PC-3 (cell line): ENCODE measurements at regions of chr6 and their contacts with region 1.

Region 1: DNA sequence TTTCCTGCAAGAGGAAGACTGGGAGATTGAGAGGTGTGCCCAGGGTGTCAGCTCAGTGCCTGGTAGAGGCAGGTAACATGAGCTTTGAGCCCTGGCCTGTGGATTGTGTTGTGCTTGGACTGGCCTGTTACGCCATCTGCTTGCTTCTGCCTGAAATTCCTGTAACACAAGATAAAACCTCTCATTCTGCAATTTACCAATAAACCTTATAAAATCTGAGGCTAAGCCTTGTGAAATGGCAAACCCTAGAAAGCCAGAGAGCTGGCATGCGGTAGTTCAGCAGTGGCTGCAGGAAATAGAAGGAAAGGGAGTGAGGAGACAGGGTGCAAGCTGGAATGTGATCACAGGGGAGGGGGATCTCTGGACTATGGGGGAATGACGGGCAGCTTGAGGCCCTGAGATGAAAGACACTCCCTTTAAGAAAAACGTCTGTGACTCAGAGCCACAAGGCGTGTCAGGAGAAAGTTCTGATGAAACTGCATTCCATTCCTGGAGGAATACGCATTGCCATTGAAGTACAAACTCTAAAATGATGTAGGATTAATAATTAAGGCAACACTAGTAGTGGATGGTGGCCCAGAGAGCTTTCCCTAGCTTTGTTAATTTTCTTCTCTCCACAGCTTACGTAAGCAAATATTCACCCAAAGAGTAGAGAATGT is 26.3 kb upstream of the TFAP2A start:
- DNase-seq: peak; percentile 98
- ATAC-seq: peak; percentile 89
- H3K4me3 ChIP-seq: peak overlapping the region; percentile 24
- H3K27ac ChIP-seq: peak overlapping the region; percentile 87
- H3K4me1 ChIP-seq: peaks cover 20% of the 10 kb centered on the region
- H3K27me3 ChIP-seq: no peaks in the 10 kb centered on the region
- CTCF ChIP-seq: peak; percentile 22; the same call in 1 of the 2 replicates

Region 2: GRCh38 chr6:10451828-10452509 is 10.8 kb after region 1 on chr6:
- CTCF ChIA-PET with region 1: no interaction called
- POLR2A ChIA-PET with region 1: interaction called, 13 read pairs
- intact Hi-C with region 1: loop called (anchors 1 kb)
- DNase-seq: peak; percentile 98
- ATAC-seq: peak; percentile 98
- H3K4me3 ChIP-seq: no peak overlapping the region
- H3K27ac ChIP-seq: peak overlapping the region; percentile 83
- H3K4me1 ChIP-seq: peaks cover 35% of the 10 kb centered on the region
- H3K27me3 ChIP-seq: no peaks in the 10 kb centered on the region
- CTCF ChIP-seq: no peak

Region 3: DNA sequence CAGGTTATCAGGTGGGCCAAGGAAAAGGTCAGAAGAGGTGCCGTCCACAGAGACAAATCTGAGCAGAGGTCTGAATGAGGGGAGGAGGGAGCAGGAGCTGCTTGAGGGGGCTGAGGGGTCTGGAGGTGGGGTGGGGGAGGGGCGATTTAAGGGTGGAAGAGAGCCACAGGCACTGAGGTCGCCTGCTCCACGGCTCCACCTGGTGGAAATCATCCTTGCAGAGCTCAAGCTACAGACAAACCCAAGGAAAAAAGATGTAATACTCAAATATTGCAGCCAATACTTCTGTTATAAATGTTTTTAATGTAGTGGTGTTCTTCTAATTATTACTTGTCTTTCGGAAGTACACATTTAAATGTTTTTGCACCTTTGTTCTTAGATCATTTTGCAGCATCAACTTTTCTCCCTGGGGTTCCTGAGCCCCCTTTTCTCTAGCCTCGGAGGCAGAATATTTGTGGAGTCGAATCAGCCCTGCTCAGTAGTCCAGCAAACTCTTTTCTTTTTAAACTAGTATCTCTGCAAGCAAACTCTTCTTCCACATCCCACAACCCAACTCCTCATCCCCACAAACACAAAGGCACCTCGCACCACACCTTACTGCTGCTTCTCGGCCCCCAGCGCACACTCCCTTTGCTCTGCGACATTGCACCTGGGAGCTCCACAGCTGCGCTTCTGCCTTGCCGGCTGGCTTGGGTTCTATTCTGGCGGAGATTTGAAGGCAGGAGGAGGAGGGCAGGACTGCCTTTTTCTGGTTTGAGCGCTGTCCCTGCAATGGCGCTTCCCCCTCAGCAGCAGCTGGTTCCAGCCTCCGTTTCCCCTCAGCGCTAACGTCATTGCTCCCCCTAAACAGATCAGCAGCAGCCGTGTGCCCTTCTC is 24.7 kb after region 1 on chr6:
- CTCF ChIA-PET with region 1: interaction called, 7 read pairs
- POLR2A ChIA-PET with region 1: no interaction called
- intact Hi-C with region 1: loop called (anchors 1 kb)
- DNase-seq: peak; percentile 75
- ATAC-seq: peak; percentile 76
- H3K4me3 ChIP-seq: no peak overlapping the region
- H3K27ac ChIP-seq: no peak overlapping the region
- H3K4me1 ChIP-seq: peaks cover 11% of the 10 kb centered on the region; the same call in 1 of the 2 replicates
- H3K27me3 ChIP-seq: no peaks in the 10 kb centered on the region
- CTCF ChIP-seq: peak; percentile 71

Region 4: GRCh38 chr6:10595731-10596664 is 154.9 kb after region 1 on chr6:
- CTCF ChIA-PET with region 1: no interaction called
- POLR2A ChIA-PET with region 1: interaction called, 10 read pairs
- intact Hi-C with region 1: no loop called
- DNase-seq: peak; percentile 72
- ATAC-seq: peak; percentile 94
- H3K4me3 ChIP-seq: no peak overlapping the region
- H3K27ac ChIP-seq: peak overlapping the region; percentile 8; the same call in 1 of the 2 replicates
- H3K4me1 ChIP-seq: peaks cover 7% of the 10 kb centered on the region; the same call in 1 of the 2 replicates
- H3K27me3 ChIP-seq: no peaks in the 10 kb centered on the region
- CTCF ChIP-seq: no peak

Region 5: GRCh38 chr6:10687582-10687981 is 246.4 kb after region 1 on chr6:
- CTCF ChIA-PET with region 1: no interaction called
- POLR2A ChIA-PET with region 1: no interaction called
- intact Hi-C with region 1: no loop called
- DNase-seq: no peak
- ATAC-seq: no peak
- H3K4me3 ChIP-seq: no peak overlapping the region
- H3K27ac ChIP-seq: no peak overlapping the region
- H3K4me1 ChIP-seq: no peaks in the 10 kb centered on the region
- H3K27me3 ChIP-seq: no peaks in the 10 kb centered on the region
- CTCF ChIP-seq: no peak